A549 (cell line): ENCODE measurements at regions of chr17 and their contacts with region 1.

Region 1: DNA sequence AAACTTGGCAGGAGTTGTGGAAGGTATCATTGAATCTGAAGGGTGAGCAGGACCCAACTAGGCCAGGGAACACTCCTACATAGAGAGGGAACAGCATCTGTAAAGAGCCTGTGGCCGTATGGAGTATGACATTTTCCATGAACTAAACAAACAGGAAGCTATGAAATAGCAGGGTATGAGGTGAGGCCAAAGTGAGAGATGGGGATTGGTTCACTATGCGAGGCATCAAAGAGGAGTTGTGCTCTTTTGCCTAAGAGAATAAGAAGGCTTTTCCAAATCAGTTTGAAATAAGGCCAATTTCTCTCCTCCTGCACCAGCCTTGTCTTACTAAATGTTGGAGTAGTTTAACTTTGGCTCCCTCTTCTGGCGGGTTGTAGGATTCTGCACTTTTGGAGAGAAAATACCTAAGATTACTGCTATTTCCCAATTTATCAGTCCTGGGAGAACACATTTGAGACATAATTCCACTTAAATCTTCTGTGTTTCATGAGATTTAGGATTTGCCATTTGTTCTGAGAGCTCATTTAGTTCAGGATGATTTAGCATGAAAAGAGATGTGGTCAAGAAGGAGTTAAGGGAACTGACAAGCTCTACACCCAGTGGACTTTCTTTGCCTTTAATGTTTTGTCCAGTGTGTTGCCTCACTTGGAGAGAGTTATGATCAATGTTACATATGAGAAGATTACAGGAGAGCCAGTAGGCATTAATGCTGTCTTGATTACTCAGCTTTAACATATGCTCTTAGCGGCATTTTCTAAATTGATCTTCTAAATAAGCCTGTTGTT is 55.4 kb downstream of the TNRC6C start:
- DNase-seq: peak; percentile 56 to 73
- ATAC-seq: peak; percentile 90 to 91
- H3K4me3 ChIP-seq: no peak overlapping the region
- H3K27ac ChIP-seq: no peak overlapping the region
- H3K4me1 ChIP-seq: no peaks in the 10 kb centered on the region
- CTCF ChIP-seq: peak; percentile 98
- EP300 ChIP-seq: no peak
- POLR2A ChIP-seq: no peak
- RAD21 ChIP-seq: peak; percentile 96 to 97

Region 2: DNA sequence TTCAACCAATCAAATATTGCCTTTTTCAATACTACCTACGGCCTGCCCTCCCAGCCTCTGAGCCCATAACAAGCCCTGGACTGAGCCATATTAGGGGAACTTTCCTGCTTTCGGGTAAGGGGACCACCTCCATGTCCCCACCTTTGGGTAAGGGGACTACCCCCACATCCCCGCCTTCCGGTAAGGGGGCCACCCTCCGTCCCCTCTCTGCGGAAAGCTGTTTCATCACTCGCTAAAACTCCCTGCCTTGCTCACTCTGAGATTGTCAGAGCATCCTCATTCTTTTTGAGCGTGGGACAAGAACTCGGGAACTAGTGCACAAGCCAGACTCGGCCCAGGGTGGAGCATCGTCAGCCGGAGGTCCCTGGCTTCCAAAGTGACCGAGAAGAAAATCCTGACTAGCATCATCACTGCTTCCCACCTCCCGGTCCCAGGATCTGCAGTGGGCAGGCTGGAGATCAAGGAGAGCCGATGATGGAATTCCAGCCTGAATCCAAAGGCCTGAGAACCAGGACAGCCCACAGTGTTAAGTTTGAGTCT is 492.9 kb before region 1 on chr17:
- CTCF ChIA-PET with region 1: interaction called, 17 read pairs
- POLR2A ChIA-PET with region 1: no interaction called
- DNase-seq: no peak
- ATAC-seq: no peak
- H3K4me3 ChIP-seq: no peak overlapping the region
- H3K27ac ChIP-seq: no peak overlapping the region
- H3K4me1 ChIP-seq: no peaks in the 10 kb centered on the region
- CTCF ChIP-seq: no peak
- EP300 ChIP-seq: no peak
- POLR2A ChIP-seq: no peak
- RAD21 ChIP-seq: no peak

Region 3: DNA sequence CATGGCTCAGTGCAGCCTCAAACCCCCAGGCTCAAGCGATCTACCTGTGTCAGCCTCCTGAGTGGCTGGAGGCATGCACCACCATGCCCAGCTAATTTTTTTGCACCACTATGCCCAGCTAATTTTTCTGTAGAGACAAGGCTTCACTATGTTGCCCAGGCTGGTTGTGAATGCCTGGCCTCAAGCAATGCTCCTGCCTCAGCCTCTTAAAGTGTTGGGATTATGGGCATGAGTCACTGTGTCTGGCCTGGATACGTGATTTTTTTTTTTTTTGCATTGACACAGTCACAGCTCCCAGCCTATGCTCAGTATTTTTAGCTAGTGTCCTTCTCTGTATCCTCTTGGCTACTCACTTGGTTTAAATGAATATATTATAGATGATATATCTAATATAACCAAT is 432.4 kb before region 1 on chr17:
- CTCF ChIA-PET with region 1: interaction called, 10 read pairs
- POLR2A ChIA-PET with region 1: no interaction called
- DNase-seq: peak in 1 of 2 experiments; percentile 45
- ATAC-seq: peak; percentile 84 to 94
- H3K4me3 ChIP-seq: no peak overlapping the region
- H3K27ac ChIP-seq: no peak overlapping the region
- H3K4me1 ChIP-seq: peaks cover 7% of the 10 kb centered on the region; the same call in 2 of the 3 replicates
- CTCF ChIP-seq: no peak
- EP300 ChIP-seq: no peak
- POLR2A ChIP-seq: no peak
- RAD21 ChIP-seq: no peak

Region 4: DNA sequence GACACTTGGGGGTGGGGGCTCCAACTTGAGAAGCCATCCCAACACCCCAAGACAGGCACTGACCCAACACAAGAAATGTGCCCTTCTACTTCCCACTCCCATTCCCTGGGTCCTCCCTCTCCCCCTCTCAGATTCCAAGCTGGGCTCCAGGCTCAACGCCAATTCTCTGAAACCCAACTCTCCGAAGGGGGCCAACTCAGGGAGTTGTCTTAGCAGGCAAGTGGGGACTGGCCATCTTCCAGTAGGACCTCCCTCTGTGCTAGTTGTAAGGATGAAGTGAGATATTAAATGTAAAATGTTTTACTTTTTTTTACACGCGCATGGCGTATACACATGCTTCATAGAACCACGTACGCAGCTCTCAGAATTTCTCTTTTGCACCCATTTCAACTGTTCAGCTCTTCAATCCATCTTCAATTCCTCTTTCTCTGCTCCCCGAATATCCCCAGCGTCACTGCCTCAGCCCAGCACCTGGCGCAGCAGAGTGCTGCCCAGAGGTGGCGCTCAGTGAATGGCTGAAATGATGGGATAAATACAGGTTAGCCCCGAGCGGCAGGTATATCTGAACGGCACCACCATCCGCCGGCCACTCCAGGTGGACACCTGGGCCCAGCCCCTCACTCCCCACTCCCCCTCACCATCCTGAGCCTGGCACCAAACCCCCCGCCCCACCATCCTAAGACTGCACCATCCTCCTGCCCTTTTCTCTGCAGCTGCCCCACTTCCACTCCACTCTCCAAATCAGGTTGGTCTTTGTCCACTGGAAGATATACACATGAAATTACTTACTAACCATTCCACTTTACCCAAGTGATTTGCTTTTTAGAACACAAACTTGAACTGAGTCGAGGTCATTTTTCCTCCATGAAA is 99.3 kb before region 1 on chr17:
- CTCF ChIA-PET with region 1: interaction called, 10 read pairs
- POLR2A ChIA-PET with region 1: no interaction called
- DNase-seq: peak in 1 of 2 experiments; percentile 40
- ATAC-seq: peak; percentile 75 to 85
- H3K4me3 ChIP-seq: no peak overlapping the region
- H3K27ac ChIP-seq: no peak overlapping the region
- H3K4me1 ChIP-seq: peaks cover 8% of the 10 kb centered on the region; the same call in 1 of the 3 replicates
- CTCF ChIP-seq: 0 out of 3 replicates have a peak, but pooled peaks have one; percentile 21
- EP300 ChIP-seq: no peak
- POLR2A ChIP-seq: no peak
- RAD21 ChIP-seq: peak; percentile 26 to 42; a peak in 2 of 5 replicates

Region 5: GRCh38 chr17:77990301-77990700 is 23.6 kb before region 1 on chr17:
- CTCF ChIA-PET with region 1: interaction called, 20 read pairs
- POLR2A ChIA-PET with region 1: no interaction called
- DNase-seq: no peak
- ATAC-seq: no peak
- H3K4me3 ChIP-seq: no peak overlapping the region
- H3K27ac ChIP-seq: no peak overlapping the region
- H3K4me1 ChIP-seq: no peaks in the 10 kb centered on the region
- CTCF ChIP-seq: no peak
- EP300 ChIP-seq: no peak
- POLR2A ChIP-seq: no peak
- RAD21 ChIP-seq: no peak

Region 6: DNA sequence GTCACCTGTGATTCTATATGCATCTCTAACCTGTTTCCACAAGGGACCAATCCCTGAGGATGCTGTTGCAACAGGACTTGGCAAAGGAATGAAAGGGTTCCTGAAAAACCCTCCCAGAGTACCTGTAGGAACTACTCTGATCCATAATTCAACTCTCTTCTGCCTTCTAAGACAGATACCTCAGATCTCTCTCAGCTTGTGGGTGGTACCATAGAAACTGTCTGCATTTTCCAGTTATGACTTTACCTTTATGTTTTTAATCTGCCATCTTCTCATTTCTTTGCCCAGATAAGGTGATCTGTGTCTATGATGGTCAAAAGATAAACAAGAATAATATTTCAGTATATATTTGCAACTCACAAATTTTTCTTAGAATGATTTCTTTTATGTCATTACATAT is 49.6 kb after region 1 on chr17:
- CTCF ChIA-PET with region 1: interaction called, 10 read pairs
- POLR2A ChIA-PET with region 1: no interaction called
- DNase-seq: no peak
- ATAC-seq: no peak
- H3K4me3 ChIP-seq: no peak overlapping the region
- H3K27ac ChIP-seq: no peak overlapping the region
- H3K4me1 ChIP-seq: no peaks in the 10 kb centered on the region
- CTCF ChIP-seq: no peak
- EP300 ChIP-seq: no peak
- POLR2A ChIP-seq: no peak
- RAD21 ChIP-seq: no peak